Activated CD4-positive, alpha-beta T cell treated with anti-CD3 and anti-CD28 coated beads, Interleukin-2, amount 10 ng/mL, durations not matched to agents 24 days and 14 days (primary cell): ENCODE measurements at regions of chr2 and their contacts with region 1.

Region 1: DNA sequence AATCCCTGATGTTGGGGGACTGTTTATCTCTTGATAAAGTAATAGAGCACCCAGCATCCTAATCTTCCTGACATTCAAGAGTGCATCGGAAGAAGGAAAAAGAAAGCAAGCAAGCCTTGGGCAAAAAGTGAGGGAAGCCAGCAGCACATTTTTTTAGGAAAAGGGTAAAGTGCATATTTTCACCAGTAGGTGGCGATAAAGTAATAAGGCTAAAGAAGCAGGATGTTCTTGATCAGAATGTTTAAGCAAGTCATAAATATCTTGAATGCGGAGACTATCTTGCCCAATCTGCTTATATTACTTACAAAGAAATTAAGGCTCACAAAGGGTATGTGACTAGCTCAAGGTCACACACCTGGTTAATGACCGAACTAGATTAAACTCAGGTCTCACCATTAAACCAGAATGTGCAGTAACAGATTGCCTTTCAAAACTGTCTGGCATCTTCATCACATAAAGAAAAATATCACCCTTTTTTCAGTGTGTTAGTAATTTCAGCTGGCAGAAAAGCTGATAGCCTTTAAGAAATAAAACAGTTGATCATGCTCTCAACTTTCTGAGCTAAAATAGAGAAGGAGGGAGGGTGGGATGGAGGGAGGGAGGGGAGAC is 83.8 kb downstream of the VIT start:
- DNase-seq: peak; percentile 74
- H3K4me3 Mint-ChIP-seq: no peak overlapping the region
- H3K27ac Mint-ChIP-seq: no peak overlapping the region
- H3K4me1 Mint-ChIP-seq: peaks cover 2% of the 10 kb centered on the region
- H3K27me3 Mint-ChIP-seq: peaks cover 33% of the 10 kb centered on the region

Region 2: GRCh38 chr2:36507408-36507812 is 272.9 kb before region 1 on chr2:
- intact Hi-C with region 1: no loop called
- DNase-seq: peak; percentile 79
- H3K4me3 Mint-ChIP-seq: no peak overlapping the region
- H3K27ac Mint-ChIP-seq: no peak overlapping the region
- H3K4me1 Mint-ChIP-seq: no peaks in the 10 kb centered on the region
- H3K27me3 Mint-ChIP-seq: no peaks in the 10 kb centered on the region

Region 3: GRCh38 chr2:36918307-36918706 is 138.0 kb after region 1 on chr2:
- intact Hi-C with region 1: loop called (anchors 5 kb)
- DNase-seq: no peak
- H3K4me3 Mint-ChIP-seq: no peak overlapping the region
- H3K27ac Mint-ChIP-seq: no peak overlapping the region
- H3K4me1 Mint-ChIP-seq: peaks cover 12% of the 10 kb centered on the region
- H3K27me3 Mint-ChIP-seq: no peaks in the 10 kb centered on the region

Region 4: GRCh38 chr2:37005118-37005868 is 225.0 kb after region 1 on chr2:
- intact Hi-C with region 1: loop called (anchors 1 kb)
- DNase-seq: peak; percentile 73
- H3K4me3 Mint-ChIP-seq: peak overlapping the region; percentile 50
- H3K27ac Mint-ChIP-seq: peak overlapping the region; percentile 27
- H3K4me1 Mint-ChIP-seq: peaks cover 14% of the 10 kb centered on the region
- H3K27me3 Mint-ChIP-seq: no peaks in the 10 kb centered on the region

Region 5: DNA sequence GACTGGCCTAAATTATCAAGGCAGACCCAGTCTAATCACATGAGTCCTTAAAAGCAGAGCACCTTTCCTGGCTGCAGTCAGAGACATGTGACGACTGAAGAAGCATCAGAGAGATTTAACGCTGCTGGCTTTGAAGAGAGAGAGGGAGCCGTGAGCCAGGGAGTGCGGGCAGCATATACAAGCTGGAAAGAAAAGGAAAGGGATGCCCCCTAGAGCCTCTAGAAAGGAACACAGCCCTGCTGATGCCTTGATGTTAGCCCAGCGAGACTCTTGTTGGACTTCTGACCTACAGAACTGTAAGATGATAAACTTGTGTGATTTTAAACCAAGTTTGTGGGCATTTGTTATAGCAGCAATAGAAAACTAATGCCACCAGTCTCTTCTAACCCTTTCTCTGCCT is 245.7 kb after region 1 on chr2:
- intact Hi-C with region 1: loop called (anchors 5 kb)
- DNase-seq: no peak
- H3K4me3 Mint-ChIP-seq: no peak overlapping the region
- H3K27ac Mint-ChIP-seq: no peak overlapping the region
- H3K4me1 Mint-ChIP-seq: no peaks in the 10 kb centered on the region
- H3K27me3 Mint-ChIP-seq: no peaks in the 10 kb centered on the region

Region 6: GRCh38 chr2:37083873-37084794 is 303.8 kb after region 1 on chr2 and contains the starts of genes GPATCH11 and HEATR5B:
- intact Hi-C with region 1: loop called (anchors 2 kb)
- DNase-seq: peak; percentile 98
- H3K4me3 Mint-ChIP-seq: no peak within 1 kb of the TSS
- H3K27ac Mint-ChIP-seq: no peak within 1 kb of the TSS
- H3K4me1 Mint-ChIP-seq: peaks cover 36% of the 10 kb centered on the region
- H3K27me3 Mint-ChIP-seq: no peaks in the 10 kb centered on the region
- total RNA-seq, gene GPATCH11: 13.8 and 15.7 TPM in 2 replicates
- total RNA-seq, gene HEATR5B: 14.7 and 14.8 TPM in 2 replicates